HEK293 (cell line): ENCODE measurements at regions of chr22 and their contacts with region 1.

Region 1: DNA sequence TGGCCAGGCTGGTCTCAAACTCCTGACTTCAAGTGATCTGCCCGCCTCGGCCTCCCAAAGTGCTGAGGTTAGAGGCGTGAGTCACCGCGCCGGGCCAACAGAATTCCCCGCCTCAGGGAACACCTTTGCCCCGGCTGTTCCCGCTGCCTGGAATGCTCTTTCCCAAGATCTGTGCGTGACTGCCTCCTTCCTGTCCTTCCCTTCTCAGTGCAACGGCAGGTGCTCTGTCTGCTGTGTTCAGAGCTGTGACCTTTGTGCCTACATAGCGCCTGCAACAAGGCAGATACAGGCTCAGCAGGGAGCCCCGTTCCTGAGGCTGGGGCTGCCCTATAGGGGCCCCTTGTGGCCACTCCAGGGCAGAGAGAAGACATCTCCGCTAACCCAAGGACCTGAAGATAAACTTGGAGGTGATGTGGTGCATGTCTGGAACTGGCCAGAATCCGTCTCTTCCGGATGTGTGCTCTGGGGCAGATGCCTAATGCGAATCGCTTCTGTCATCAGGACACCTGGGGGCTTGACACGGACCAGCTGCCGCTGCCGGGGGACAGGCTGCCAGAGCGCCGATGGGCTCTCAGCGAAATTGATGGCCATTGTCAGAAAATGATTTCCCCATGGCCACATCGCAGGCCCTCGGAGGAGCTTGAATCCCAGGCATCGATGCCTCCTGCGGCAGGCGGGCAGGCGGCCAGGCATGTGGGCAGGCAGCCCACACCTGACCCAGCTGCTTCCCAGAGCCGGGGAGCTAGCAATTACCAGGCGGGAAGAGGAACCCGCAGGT is 43.5 kb upstream of the TCF20 start:
- H3K4me3 ChIP-seq: no peak overlapping the region
- H3K27ac ChIP-seq: no peak overlapping the region; the same call in 1 of the 2 replicates
- H3K4me1 ChIP-seq: peaks cover 17% of the 10 kb centered on the region
- CTCF ChIP-seq: no peak; the same call in 1 of the 2 replicates

Region 2: GRCh38 chr22:42303396-42304323 is 10.3 kb before region 1 on chr22:
- CTCF ChIA-PET with region 1: interaction called, 13 read pairs
- POLR2A ChIA-PET with region 1: no interaction called
- H3K4me3 ChIP-seq: no peak overlapping the region
- H3K27ac ChIP-seq: no peak overlapping the region
- H3K4me1 ChIP-seq: peaks cover 5% of the 10 kb centered on the region
- CTCF ChIP-seq: no peak

Region 3: DNA sequence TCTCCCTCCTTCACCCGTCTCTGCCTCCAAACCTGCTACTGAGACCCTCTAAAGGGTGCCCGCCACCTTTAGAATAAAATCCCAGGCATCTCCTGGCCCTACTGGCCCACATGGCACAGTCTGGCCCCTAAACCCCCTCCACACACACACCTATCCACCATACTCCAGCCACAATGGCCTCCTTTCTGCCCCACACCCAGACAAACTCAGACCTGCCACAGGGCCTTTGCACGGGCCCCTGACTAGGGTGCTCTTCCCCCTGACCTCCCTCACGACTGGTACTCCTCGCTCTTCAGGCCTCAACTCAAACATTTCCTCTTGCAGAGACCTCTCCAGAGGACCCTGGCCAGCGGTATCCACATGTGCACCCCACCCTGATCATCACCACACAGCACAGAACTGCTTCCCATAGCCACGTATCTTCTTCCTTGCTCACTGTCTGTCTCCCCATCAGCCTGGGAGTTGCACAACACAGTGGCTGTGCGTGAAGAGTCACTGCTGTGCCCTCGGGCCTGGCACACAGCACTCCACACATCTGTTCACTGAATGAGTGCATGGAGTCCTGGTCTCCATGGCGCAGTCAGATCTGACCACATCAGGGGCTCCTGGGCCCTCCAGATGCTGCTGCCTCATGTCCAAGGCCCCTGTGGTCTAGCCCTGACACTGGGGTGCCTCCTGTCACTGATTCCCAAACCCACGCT is 22.7 kb after region 1 on chr22:
- CTCF ChIA-PET with region 1: no interaction called
- POLR2A ChIA-PET with region 1: no interaction called
- H3K4me3 ChIP-seq: no peak overlapping the region
- H3K27ac ChIP-seq: no peak overlapping the region
- H3K4me1 ChIP-seq: peaks cover 5% of the 10 kb centered on the region
- CTCF ChIP-seq: no peak